ENCODE measurements at regions of chr3 and their contacts with region 1.

Region 1: DNA sequence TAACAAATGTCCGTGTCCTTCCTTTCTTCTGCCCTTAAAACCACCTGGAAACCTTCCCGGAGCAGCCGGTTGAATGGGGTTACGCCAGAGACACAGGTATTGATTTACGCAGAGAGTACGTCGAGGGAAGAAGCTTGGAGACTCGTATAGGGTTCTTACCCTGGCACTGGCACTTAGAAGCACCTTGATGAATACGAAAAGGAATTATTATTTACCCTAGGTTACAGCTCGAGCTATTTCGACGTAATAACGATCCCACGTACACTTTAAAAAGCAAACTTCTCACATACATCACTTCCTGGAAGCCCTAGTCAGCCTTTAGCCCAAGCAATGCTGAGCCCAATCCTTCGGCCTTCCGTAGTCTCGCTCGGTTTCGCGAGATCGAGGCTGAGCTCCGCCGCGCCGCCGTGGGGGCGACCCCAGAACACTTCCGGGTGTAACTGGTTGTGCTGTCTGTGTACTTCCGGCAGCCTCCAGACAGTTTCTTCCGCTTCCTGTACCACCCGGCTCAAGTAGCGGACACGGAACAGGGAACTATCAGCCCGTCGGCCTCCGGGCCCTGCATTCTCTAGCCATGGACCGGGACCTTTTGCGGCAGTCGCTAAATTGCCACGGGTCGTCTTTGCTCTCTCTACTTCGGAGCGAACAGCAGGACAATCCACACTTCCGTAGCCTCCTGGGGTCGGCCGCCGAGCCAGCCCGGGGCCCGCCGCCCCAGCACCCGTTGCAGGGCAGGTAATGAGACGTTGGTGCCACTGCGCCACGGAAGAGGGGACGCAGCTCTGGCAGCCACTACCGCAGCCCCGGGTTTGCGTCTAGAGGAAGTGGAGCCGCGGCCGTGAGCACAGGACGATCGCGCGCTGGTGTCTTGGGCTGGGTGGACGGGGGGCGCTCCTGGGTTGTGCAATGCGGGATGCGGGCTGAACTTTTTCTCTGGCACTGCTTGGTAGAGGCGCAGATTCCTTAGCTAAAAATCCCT is at the start of gene TTC14:
- DNase-seq: peak; percentile 94
- ATAC-seq: peak; percentile 98
- H3K4me3 ChIP-seq: peak within 1 kb of the TSS; percentile 77
- H3K27ac ChIP-seq: peak within 1 kb of the TSS; percentile 79
- H3K4me1 ChIP-seq: no peaks in the 10 kb centered on the region
- H3K27me3 ChIP-seq: no peaks in the 10 kb centered on the region
- CTCF ChIP-seq: no peak
- POLR2A ChIP-seq: peak; percentile 59; the same call in 1 of the 2 replicates
- RAD21 ChIP-seq: no peak; the same call in 1 of the 2 replicates
- total RNA-seq, gene TTC14: 23.1 and 38.5 TPM in 2 replicates

Region 2: GRCh38 chr3:179768080-179768479 is 833.9 kb before region 1 on chr3:
- CTCF ChIA-PET with region 1: no interaction called
- POLR2A ChIA-PET with region 1: no interaction called
- dilution Hi-C with region 1: no loop called
- in situ Hi-C with region 1: loop called (anchors 25 kb)
- intact Hi-C with region 1: loop called (anchors 1 kb)
- DNase-seq: peak; percentile 70
- ATAC-seq: peak; percentile 86
- H3K4me3 ChIP-seq: no peak overlapping the region
- H3K27ac ChIP-seq: no peak overlapping the region
- H3K4me1 ChIP-seq: no peaks in the 10 kb centered on the region
- H3K27me3 ChIP-seq: no peaks in the 10 kb centered on the region
- CTCF ChIP-seq: peak; percentile 70
- POLR2A ChIP-seq: no peak
- RAD21 ChIP-seq: peak; percentile 79

Region 3: DNA sequence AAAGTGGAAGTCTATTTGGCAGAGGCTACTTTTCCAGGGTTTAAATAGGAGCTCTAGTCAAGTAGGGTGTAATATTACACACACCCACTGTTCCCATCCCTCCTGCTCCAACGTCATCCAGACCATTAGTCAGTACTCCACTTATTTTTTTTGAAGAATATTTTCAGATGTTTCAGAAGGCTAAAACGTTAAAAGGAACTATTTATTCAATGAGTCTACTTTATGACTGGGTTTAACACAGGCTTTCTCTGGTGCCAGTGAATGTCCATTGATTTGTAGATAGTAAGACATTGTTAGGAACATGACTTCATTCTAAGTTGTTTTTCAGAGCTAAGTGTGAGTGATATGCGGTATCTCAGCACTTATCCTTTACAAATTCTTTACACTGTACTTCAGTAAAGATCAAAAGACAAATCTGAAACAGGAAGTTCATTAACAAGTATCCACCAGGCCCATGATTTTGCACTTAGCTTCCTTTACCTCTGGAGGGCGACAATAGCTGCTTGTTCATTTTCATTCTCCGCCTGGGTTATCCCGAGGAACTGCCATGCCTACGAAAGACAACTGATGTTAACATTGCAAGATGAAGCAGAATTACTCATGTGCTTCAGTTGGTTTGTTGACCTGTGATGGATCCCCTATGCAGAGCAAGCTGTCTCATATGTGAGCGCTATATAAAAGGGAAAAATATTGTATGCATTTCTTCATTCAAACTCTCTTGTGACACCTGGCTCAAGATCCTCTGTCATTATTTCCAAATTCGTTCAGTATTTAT is 790.5 kb before region 1 on chr3:
- CTCF ChIA-PET with region 1: interaction called, 3 read pairs
- POLR2A ChIA-PET with region 1: no interaction called
- dilution Hi-C with region 1: no loop called
- in situ Hi-C with region 1: loop called (anchors 25 kb)
- intact Hi-C with region 1: loop called (anchors 1 kb)
- DNase-seq: peak; percentile 93
- ATAC-seq: peak; percentile 94
- H3K4me3 ChIP-seq: peak overlapping the region; percentile 20; the same call in 1 of the 2 replicates
- H3K27ac ChIP-seq: no peak overlapping the region
- H3K4me1 ChIP-seq: peaks cover 2% of the 10 kb centered on the region; the same call in 1 of the 2 replicates
- H3K27me3 ChIP-seq: no peaks in the 10 kb centered on the region
- CTCF ChIP-seq: peak; percentile 78
- POLR2A ChIP-seq: no peak
- RAD21 ChIP-seq: peak; percentile 76

Region 4: DNA sequence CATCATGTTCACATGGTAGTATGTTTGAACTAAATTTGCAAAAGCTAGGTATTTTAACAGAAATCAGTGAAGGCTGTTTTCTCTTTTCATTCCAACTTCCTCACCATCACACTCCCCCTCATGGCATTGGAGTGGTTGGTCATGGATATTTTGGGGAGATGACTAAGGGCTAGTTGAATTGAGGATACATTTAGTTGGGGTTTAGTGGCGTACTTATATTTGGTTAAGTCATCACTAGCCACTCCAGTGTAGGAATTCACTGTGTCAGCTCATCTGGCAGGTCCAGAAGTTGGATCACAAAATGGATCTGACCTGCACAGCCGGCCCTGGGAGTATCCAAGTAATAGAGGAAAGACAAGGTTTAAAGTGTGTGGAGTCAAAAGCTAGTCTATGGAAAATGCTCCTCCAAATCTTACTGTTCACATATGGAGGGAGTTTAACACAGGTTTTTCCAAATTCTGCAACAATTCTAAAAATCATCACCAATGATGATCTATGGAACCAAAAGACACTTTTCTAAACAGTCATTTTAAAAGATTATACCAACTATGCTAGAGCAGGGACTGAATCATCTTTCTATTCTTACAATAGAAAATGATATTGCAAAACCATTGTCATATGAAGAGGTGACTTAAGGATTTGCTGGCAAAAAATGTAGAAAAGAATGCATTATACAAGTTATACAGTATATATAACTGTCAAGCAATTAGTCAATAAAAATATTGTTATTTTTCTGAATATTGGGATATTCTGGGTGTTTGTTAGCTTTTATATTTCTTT is 317.5 kb before region 1 on chr3:
- CTCF ChIA-PET with region 1: no interaction called
- POLR2A ChIA-PET with region 1: no interaction called
- dilution Hi-C with region 1: no loop called
- in situ Hi-C with region 1: no loop called
- intact Hi-C with region 1: no loop called
- DNase-seq: peak; percentile 50
- ATAC-seq: no peak
- H3K4me3 ChIP-seq: no peak overlapping the region
- H3K27ac ChIP-seq: no peak overlapping the region
- H3K4me1 ChIP-seq: no peaks in the 10 kb centered on the region
- H3K27me3 ChIP-seq: no peaks in the 10 kb centered on the region
- CTCF ChIP-seq: no peak
- POLR2A ChIP-seq: no peak
- RAD21 ChIP-seq: no peak

Region 5: DNA sequence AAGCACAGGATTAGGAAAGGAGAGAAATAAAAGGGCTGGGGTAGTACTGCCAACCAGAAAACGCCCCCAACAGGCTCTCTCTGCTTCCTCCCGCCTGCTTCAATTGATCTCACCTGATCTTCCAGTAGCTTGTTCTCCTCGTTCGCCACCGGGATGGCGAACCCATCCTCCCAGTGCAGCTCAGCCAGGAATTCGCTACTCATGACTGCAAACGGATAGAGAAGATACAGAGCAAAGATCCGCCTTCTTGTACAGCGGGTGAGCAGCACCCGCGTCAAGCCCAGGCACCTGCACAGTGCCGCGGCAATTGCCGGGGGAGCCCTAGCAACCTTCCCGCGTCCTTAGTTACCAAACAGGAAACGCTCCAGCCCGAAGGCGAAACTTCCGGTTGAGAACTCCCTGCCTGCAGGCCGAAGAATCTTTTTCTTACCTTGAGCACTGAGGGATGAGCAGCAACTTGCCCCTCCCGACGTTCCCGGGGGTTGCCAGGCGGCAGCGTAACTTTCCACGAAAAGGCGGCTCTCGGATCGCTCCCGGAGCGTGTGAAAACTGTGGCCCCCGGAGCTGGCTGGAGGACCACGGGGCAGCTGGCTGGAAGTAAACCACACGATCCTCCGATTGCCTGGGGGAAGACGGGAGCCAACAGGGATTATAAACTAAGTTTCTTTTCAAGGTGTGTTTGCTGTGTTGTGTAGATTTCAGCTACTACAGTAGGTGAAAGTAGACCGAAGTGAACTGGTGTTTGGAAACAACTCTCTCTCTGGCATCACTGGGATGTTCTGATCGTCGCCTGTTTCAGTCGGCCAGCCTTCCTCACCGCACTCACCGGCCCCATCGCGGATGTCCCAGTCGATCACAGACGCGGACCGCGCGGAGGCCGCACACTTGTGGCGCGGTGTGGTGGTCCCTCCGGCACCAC is 77.5 kb after region 1 on chr3 and contains the start of gene CCDC39:
- CTCF ChIA-PET with region 1: no interaction called
- POLR2A ChIA-PET with region 1: no interaction called
- dilution Hi-C with region 1: no loop called
- in situ Hi-C with region 1: no loop called
- intact Hi-C with region 1: loop called (anchors 2 kb)
- DNase-seq: peak; percentile 49
- ATAC-seq: peak; percentile 89
- H3K4me3 ChIP-seq: peak within 1 kb of the TSS; percentile 69
- H3K27ac ChIP-seq: no peak within 1 kb of the TSS
- H3K4me1 ChIP-seq: no peaks in the 10 kb centered on the region
- H3K27me3 ChIP-seq: no peaks in the 10 kb centered on the region
- CTCF ChIP-seq: no peak
- POLR2A ChIP-seq: no peak
- RAD21 ChIP-seq: no peak
- total RNA-seq, gene CCDC39: not detected in 2 replicates